PC-3 (cell line): ENCODE measurements at regions of chr7 and their contacts with region 1.

Region 1: DNA sequence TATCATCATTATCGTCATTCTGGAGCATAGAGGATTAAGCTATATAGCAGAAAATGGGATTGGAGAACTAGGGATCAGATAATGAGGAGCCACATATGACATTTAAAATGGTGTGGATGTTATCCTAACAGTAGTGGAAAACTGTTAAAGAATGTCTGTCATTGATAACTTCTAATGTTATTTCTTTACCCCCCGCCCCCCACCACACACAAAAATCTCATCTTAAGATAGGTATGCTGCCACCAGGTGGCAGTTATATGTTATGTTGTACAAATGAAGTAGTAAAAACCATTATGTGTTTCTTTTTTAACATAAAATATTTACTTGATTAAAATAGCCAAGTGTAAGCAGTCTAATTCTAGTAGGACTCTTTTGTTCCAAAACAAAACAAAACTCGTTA is 13.0 kb downstream of the AKAP9 start:
- DNase-seq: peak; percentile 18
- ATAC-seq: no peak
- H3K4me3 ChIP-seq: no peak overlapping the region
- H3K27ac ChIP-seq: no peak overlapping the region
- H3K4me1 ChIP-seq: peaks cover 14% of the 10 kb centered on the region
- H3K27me3 ChIP-seq: no peaks in the 10 kb centered on the region
- CTCF ChIP-seq: peak; percentile 66

Region 2: DNA sequence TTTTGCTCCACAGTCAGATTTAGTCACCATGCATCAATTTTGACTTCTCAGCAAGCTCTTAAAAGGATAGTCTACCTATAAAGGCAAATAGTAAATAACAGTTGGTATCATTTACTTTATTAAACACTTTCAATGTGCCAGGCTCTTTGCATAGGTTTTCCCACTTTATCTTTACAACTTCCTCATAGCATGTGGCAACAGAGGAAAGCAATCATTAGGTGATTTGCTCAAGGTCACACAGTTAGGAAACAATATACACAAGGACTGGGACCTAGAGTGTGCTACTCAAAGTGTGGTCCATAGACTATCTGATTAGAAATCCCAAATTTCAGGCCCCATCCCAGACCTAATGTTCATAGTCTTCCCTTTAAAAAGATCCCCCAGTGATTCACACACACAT is 285.4 kb before region 1 on chr7:
- CTCF ChIA-PET with region 1: no interaction called
- POLR2A ChIA-PET with region 1: no interaction called
- intact Hi-C with region 1: no loop called
- DNase-seq: no peak
- ATAC-seq: no peak
- H3K4me3 ChIP-seq: no peak overlapping the region
- H3K27ac ChIP-seq: no peak overlapping the region
- H3K4me1 ChIP-seq: no peaks in the 10 kb centered on the region
- H3K27me3 ChIP-seq: no peaks in the 10 kb centered on the region
- CTCF ChIP-seq: no peak

Region 3: GRCh38 chr7:91898246-91898992 is 55.2 kb before region 1 on chr7:
- CTCF ChIA-PET with region 1: no interaction called
- POLR2A ChIA-PET with region 1: no interaction called
- intact Hi-C with region 1: loop called (anchors 2 kb)
- DNase-seq: peak; percentile 48
- ATAC-seq: peak; percentile 82
- H3K4me3 ChIP-seq: peak overlapping the region; percentile 56
- H3K27ac ChIP-seq: 0 out of 2 replicates have a peak overlapping the region, but pooled peaks have one; percentile 11
- H3K4me1 ChIP-seq: peaks cover 23% of the 10 kb centered on the region
- H3K27me3 ChIP-seq: no peaks in the 10 kb centered on the region
- CTCF ChIP-seq: no peak

Region 4: GRCh38 chr7:91922857-91923256 is 30.8 kb before region 1 on chr7:
- CTCF ChIA-PET with region 1: no interaction called
- POLR2A ChIA-PET with region 1: no interaction called
- intact Hi-C with region 1: loop called (anchors 1 kb)
- DNase-seq: no peak
- ATAC-seq: peak; percentile 58
- H3K4me3 ChIP-seq: no peak overlapping the region
- H3K27ac ChIP-seq: no peak overlapping the region
- H3K4me1 ChIP-seq: no peaks in the 10 kb centered on the region
- H3K27me3 ChIP-seq: no peaks in the 10 kb centered on the region
- CTCF ChIP-seq: no peak